ENCODE measurements at regions of chr12 and their contacts with region 1.

Region 1: DNA sequence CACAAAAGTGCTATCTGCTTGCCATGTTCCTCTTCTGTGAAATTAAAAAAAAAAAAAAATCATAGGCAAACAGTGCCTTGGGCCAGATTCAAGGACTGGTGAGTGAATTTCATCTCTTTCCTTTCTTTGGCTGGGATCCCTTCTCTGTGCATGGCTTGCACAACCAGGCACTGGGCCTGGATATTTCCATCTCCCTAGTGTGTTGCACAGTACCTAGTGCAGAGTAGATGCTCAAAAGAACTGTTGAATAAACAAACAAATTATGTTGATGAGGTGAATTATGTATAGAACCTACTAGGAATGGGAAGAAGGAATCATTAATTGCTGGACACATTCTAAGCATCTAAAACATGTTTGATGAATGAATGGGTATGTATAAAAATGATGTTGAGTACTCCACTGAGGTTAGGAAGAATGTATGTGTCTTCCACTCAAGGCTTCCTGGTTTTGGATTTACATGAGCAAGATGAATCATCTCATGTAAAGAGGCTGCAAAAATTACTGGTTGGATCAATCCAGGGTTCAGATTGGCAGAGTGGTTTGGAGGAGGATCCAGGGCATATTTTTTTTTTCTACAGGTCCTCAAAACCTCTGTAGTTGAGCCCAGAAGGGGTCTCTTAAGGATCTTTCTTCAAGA is 93.2 kb downstream of the EMP1 start:
- DNase-seq: no peak
- ATAC-seq: no peak
- H3K4me3 ChIP-seq: no peak overlapping the region
- H3K27ac ChIP-seq: no peak overlapping the region
- H3K4me1 ChIP-seq: no peaks in the 10 kb centered on the region
- H3K27me3 ChIP-seq: no peaks in the 10 kb centered on the region
- CTCF ChIP-seq: no peak
- POLR2A ChIP-seq: no peak
- RAD21 ChIP-seq: no peak

Region 2: DNA sequence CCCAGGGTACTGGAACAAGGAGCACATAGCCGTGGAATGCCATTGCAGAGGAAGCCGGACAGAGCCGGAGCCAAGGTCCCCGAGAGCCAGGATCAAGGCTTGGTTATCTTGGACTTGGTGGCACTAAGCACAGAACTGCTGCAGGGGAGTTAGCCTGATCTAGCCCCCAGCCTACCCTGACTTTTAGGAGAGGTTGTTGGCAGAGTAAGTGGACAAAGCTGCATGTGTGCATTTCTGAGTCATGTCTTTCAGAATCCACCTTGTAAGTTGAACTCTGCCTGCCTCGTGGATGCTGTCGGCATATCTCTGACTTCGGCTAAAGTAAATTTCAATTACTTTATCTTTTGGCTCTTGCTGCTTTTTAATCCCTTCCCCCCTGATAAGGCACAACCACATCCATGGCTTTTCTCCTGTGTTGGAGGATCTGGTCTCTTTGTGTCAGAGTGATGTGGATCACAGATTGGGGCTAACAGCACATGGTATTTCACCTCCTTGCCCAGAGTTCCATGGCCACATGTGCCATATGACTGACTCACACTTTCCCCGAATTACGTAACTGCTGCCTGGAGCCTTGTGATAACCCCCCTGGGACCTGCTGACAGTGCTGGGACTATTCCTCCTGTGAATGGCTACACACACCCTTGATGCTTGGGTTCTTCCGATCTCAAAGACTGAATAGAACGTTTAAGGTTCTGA is 147.1 kb after region 1 on chr12:
- CTCF ChIA-PET with region 1: no interaction called
- POLR2A ChIA-PET with region 1: no interaction called
- RAD21 ChIA-PET with region 1: no interaction called
- intact Hi-C with region 1: loop called (anchors 10 kb)
- DNase-seq: no peak
- ATAC-seq: no peak
- H3K4me3 ChIP-seq: no peak overlapping the region
- H3K27ac ChIP-seq: no peak overlapping the region
- H3K4me1 ChIP-seq: peaks cover 4 to 23% of the 10 kb centered on the region in 2 experiments; a peak in 2 of 4 replicates
- H3K27me3 ChIP-seq: no peaks in the 10 kb centered on the region
- CTCF ChIP-seq: no peak
- POLR2A ChIP-seq: no peak
- RAD21 ChIP-seq: no peak

Region 3: DNA sequence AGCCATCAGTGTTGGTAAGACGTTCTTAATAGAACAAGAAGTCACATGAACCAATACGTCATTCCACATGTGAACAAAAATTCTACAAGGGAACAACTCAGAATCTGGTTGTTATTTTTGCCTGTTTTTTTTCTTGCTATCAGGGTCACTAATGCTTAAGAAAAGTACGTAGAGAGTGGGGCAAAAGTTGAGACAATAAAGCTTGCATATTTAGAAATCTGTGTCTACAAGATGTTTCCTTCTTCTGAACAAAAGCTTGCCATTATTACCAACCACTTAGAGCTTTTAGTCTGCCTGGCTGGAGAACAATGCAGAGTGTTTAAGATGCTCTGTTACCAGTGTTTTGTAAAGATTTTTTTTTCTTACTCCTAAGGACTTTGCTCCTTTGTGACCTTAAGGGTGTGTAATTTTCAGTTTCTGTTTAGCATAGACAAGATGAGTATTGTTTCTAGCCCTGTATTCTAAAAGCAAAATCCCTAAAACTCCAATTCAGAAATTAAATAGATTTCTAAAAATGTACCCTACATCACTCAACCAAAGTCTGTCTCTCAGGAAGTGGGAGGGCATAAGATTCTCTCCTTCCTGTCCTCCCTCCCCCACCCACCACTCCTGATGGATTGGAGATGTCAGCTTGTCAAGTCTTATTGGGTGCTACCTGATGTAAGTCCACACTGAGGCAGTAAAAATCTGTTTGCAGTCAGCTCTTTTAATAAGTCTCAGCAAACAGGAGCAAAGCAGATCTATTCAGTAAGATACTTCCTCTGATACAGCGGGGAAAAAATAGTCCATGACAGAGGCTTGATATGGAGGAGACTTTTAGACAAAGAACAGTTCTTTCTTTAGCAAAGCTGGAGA is 424.0 kb after region 1 on chr12:
- CTCF ChIA-PET with region 1: no interaction called
- POLR2A ChIA-PET with region 1: no interaction called
- RAD21 ChIA-PET with region 1: no interaction called
- intact Hi-C with region 1: no loop called
- DNase-seq: no peak
- ATAC-seq: no peak
- H3K4me3 ChIP-seq: no peak overlapping the region
- H3K27ac ChIP-seq: no peak overlapping the region
- H3K4me1 ChIP-seq: peaks cover 0 to 2% of the 10 kb centered on the region in 2 experiments; a peak in 2 of 4 replicates
- H3K27me3 ChIP-seq: no peaks in the 10 kb centered on the region
- CTCF ChIP-seq: no peak
- POLR2A ChIP-seq: no peak
- RAD21 ChIP-seq: no peak

Measured in HCT116 (cell line).